ENCODE measurements at regions of chr10 and their contacts with region 1.

Region 1: DNA sequence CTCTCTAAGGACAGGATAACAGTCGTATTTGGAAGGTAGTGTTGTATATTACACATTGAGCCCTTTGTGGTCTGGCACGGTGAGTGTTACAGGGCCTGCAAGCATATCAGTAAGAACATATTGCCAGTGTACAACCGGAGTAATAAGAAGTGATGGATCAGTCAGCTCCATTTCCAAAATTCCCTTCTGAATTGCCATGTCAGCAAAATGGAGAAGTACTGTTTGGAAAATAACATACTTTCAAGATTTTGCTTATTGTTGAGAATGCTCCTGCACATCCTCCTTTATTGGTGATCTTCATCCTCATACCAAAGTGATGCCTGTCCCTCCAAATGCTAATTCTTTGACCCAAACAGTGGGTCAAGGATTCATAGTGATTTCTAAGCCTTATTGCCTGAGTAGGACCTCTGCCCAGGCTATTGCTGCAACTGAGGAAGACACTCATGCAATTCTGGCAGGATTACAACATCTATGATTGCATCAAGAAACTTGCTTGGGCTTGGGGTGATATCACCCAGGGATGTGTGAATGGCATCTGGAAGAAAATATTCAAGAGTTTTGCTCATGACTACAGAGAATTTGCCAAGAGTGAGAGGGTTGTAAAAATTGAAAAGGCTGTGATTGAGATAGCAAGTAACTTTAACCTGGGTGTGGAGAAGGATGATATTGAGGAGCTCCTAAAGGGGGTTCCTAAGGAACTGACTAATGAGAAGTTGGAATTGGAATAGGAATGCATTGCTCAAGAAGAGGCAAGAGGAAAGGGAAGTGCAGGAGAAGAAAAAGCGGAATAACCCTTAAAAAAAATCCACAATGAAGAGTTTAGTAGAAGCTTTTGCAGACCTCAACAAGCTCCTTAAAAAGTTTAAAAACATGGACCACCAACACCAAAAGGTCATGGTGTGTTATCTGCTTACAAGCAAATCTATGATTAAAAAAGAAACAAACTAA is 452.2 kb upstream of the SORCS1 start:
- DNase-seq: peak; percentile 94
- H3K4me3 Mint-ChIP-seq: peak overlapping the region; percentile 2
- H3K27ac Mint-ChIP-seq: peak overlapping the region; percentile 49
- H3K4me1 Mint-ChIP-seq: peaks cover 43% of the 10 kb centered on the region
- H3K27me3 Mint-ChIP-seq: no peaks in the 10 kb centered on the region
- CTCF ChIP-seq: no peak

Region 2: GRCh38 chr10:107546287-107546686 is 70.5 kb before region 1 on chr10:
- CTCF ChIA-PET with region 1: interaction called, 3 read pairs
- POLR2A ChIA-PET with region 1: interaction called, 4 read pairs
- intact Hi-C with region 1: loop called (anchors 1 kb)
- DNase-seq: peak; percentile 89
- H3K4me3 Mint-ChIP-seq: peak overlapping the region; percentile 58
- H3K27ac Mint-ChIP-seq: peak overlapping the region; percentile 84
- H3K4me1 Mint-ChIP-seq: peaks cover 18% of the 10 kb centered on the region
- H3K27me3 Mint-ChIP-seq: no peaks in the 10 kb centered on the region
- CTCF ChIP-seq: no peak

Region 3: GRCh38 chr10:107733328-107734130 is 116.8 kb after region 1 on chr10:
- CTCF ChIA-PET with region 1: no interaction called
- POLR2A ChIA-PET with region 1: no interaction called
- intact Hi-C with region 1: loop called (anchors 10 kb)
- DNase-seq: no peak
- H3K4me3 Mint-ChIP-seq: no peak overlapping the region
- H3K27ac Mint-ChIP-seq: no peak overlapping the region
- H3K4me1 Mint-ChIP-seq: peaks cover 12% of the 10 kb centered on the region
- H3K27me3 Mint-ChIP-seq: no peaks in the 10 kb centered on the region
- CTCF ChIP-seq: no peak